ENCODE measurements at regions of chr3 and their contacts with region 1.

Region 1: DNA sequence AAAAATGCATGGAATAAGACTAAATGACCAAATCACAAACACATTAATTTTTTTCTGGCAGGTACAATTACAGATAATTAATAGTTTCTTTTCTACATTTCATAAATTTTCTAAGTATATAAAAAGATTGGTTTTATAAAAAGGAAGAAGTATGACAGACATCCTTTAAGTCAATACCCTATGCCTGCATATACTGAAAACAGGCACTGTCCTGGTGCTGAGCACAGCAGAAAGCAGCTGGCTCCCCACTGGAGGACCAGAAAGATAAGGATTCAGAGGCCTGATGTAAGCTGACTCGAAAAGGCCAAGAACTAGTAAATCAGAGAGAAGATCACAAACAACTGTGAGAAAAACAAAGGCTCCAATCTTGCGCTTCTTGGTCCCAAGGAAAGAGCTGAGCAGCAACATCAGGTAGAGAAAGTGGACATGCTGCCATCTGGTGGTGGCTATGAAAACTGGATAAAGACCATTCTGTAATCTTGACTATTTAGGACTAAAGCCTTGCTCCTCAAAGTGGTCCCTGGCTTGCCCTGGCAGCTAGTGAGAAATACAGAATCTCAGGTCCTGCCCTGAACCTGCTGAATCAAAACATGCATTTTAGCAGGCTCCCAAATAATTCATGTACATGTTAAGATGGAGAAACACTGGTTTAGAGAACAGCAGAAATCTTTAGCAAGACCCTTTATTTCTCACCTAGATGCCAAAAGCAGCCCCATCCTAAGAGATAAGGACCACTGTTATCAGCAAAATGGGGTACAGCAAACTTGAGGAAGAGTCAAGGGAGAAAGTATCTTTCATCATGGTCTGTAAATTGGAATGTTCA is 76.0 kb downstream of the TRANK1 start:
- DNase-seq: peak; percentile 65 to 84 (median 73)
- H3K4me3 ChIP-seq: no peak overlapping the region
- H3K27ac ChIP-seq: no peak overlapping the region
- H3K4me1 ChIP-seq: peaks cover 5 to 18% (median 10%) of the 10 kb centered on the region in 4 experiments
- H3K27me3 ChIP-seq: no peaks in the 10 kb centered on the region

Region 2: GRCh38 chr3:36729204-36730056 is 139.4 kb before region 1 on chr3:
- CTCF ChIA-PET with region 1: interaction called, 21 read pairs
- POLR2A ChIA-PET with region 1: no interaction called
- DNase-seq: peak; percentile 47 to 74 (median 66)
- H3K4me3 ChIP-seq: no peak overlapping the region
- H3K27ac ChIP-seq: no peak overlapping the region
- H3K4me1 ChIP-seq: peaks cover 0 to 5% (median 1%) of the 10 kb centered on the region in 4 experiments
- H3K27me3 ChIP-seq: no peaks in the 10 kb centered on the region

Region 3: GRCh38 chr3:36734742-36735141 is 134.1 kb before region 1 on chr3:
- CTCF ChIA-PET with region 1: interaction called, 21 read pairs
- POLR2A ChIA-PET with region 1: no interaction called
- DNase-seq: no peak
- H3K4me3 ChIP-seq: no peak overlapping the region
- H3K27ac ChIP-seq: no peak overlapping the region
- H3K4me1 ChIP-seq: peaks cover 0 to 10% (median 5%) of the 10 kb centered on the region in 4 experiments
- H3K27me3 ChIP-seq: no peaks in the 10 kb centered on the region

Region 4: DNA sequence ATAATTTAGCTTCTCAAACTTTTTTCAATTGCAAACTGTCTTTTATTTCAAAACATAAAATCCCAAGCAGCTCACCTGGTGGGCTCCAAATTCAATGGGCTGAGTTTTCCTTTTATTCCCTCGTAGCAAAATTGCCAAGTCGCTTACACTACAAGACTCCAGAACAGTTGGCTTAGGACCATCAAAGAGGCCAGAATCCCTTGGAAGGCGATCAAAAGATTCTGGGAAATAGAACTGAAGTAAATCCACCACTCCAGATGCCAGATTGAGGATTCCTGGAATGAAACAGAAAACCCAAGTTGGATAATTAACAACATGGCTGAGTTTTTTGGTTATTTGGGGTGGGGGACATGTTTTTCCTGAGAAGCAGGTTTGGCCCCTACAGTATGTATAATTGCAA is 16.8 kb before region 1 on chr3:
- CTCF ChIA-PET with region 1: interaction called, 39 read pairs
- POLR2A ChIA-PET with region 1: no interaction called
- DNase-seq: no peak
- H3K4me3 ChIP-seq: no peak overlapping the region
- H3K27ac ChIP-seq: no peak overlapping the region
- H3K4me1 ChIP-seq: no peaks in the 10 kb centered on the region
- H3K27me3 ChIP-seq: no peaks in the 10 kb centered on the region

Region 5: GRCh38 chr3:36944012-36944640 is 75.3 kb after region 1 on chr3:
- CTCF ChIA-PET with region 1: no interaction called
- POLR2A ChIA-PET with region 1: no interaction called
- DNase-seq: peak in 2 of 3 donors; percentile 60 to 72
- H3K4me3 ChIP-seq: peak overlapping the region; percentile 70 to 92 (median 84)
- H3K27ac ChIP-seq: peak overlapping the region; percentile 40 to 72
- H3K4me1 ChIP-seq: peaks cover 0 to 18% (median 16%) of the 10 kb centered on the region in 4 experiments
- H3K27me3 ChIP-seq: no peaks in the 10 kb centered on the region